Cardiac septum (tissue), 1 donor: ENCODE measurements at regions of chr16 and their contacts with region 1.

Region 1: DNA sequence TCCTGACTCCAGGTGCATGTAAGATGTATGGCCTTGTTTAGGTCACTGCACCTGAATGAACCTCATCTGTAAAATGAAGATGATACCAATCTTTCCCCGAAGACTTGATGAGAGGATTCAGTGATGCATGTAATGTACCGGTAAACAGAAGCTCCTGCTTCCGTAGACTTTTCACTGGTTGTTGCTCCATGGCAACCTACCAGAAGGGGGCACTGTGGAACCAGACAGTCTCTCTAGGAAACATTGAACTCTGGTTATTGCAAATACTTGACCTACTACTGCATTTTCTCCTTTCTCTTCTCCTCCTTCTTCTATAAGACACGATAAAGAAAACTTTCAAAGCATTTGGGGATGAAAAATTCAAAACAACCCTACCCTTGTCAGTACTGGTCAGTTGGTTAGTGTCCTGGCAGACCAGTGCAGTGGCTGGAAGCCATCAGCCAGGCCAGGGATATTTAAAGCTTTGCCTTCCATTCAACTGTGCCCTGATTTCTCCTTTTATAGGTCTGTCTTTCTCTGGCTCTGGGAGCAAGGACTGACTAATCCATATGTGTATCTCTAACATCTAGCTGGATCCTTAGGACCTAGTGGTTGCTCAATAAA is 667.4 kb upstream of the SALL1 start:
- DNase-seq: no peak

Region 2: DNA sequence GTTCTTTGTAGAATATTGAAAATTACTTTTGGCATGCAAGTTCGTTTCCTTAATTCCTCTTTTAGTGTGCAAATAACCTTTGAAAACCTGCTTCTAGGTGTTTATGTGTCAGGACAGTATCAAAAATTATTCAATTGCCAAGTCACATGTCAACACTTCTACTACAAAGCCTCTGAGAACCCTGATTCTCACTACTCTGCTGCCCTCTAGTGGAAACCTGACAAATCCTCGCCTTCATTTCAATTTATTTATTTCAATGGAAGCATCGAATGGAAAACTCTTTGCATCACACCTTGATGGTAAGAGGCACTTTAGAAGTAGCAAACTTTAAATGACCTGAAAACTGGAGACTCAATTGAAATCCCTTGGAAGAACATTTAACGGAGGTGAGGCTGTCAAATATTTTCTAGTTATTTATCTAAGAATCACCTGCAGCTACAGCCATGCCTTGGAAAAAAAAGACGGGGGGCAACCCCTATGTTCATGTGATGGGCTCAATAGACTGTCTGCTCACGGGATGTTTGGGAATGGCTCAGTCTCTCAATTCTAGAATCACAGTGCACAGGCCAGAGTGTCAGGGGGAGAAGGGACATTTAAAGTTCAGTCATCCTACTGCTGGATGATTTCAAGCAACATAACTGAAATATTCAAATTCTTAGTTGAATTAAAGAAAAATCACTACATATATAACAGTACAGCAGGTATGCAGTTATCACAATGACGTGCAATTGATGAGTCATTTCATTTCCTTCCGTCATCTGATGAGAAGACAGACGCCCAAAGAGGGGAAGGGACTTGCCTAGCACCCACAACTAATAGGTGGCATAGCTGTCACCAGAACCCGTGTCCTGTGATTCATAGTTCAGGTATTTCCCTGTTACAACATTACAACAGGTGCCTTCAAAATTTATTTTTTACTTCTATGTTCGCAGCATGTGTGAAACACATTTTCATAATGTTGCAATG is 164.6 kb after region 1 on chr16:
- intact Hi-C with region 1: loop called (anchors 10 kb)
- DNase-seq: no peak